BJ (cell line): ENCODE measurements at regions of chr17 and their contacts with region 1.

Region 1: DNA sequence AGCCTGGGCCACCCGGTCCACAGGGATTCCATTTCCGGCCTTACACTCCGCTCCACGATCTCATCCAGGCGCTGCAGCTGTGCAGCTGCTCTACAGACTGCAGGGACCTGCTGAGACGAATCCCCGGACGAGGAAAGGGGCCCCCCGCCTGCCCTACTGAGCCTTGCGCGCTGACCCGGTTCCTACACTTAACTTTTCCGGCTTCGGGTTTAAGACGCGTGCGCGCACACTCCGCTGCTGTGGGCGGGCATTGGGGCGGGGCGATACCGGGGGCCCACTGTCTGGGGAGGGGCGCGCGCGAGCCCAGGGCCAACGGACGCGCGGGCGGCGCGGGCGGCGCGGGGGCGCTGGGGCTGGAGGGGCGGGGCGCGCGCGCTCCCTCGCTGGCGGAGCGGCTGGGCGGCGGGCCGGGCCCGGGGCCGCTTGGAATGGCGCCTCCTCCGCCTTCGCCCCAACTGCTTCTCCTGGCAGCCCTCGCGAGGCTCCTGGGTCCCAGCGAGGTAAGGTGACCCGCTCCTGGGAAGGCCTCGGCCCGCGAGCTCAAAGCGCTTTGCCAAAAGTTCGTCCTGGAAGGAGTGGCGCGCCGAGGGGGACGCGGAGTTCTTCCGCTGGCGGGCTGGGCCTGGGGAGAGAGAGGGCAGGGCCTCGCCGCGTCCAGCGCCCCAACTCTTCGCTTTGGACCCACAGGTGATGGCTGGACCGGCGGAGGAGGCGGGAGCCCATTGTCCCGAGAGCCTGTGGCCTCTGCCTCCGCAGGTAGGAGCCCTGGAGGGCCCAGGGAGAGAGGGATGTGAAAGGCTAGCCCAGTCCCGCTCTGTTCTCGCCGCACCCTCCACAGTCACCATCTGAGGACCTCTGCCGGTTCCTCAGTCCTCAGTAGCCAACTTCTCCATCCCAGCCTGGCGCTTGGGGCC is at the start of gene TP53I13:
- DNase-seq: no peak
- H3K4me3 ChIP-seq: peak within 1 kb of the TSS; percentile 79
- H3K27me3 ChIP-seq: no peaks in the 10 kb centered on the region
- CTCF ChIP-seq: 0 out of 2 replicates have a peak, but pooled peaks have one; percentile 5
- polyA plus RNA-seq, gene TP53I13: 26.8 and 38.7 TPM in 2 replicates

Region 2: GRCh38 chr17:29376667-29377270 is 191.8 kb before region 1 on chr17:
- CTCF ChIA-PET with region 1: interaction called, 59 read pairs
- POLR2A ChIA-PET with region 1: interaction called, 4 read pairs
- DNase-seq: peak; percentile 36
- H3K4me3 ChIP-seq: no peak overlapping the region
- H3K27me3 ChIP-seq: no peaks in the 10 kb centered on the region
- CTCF ChIP-seq: no peak

Region 3: DNA sequence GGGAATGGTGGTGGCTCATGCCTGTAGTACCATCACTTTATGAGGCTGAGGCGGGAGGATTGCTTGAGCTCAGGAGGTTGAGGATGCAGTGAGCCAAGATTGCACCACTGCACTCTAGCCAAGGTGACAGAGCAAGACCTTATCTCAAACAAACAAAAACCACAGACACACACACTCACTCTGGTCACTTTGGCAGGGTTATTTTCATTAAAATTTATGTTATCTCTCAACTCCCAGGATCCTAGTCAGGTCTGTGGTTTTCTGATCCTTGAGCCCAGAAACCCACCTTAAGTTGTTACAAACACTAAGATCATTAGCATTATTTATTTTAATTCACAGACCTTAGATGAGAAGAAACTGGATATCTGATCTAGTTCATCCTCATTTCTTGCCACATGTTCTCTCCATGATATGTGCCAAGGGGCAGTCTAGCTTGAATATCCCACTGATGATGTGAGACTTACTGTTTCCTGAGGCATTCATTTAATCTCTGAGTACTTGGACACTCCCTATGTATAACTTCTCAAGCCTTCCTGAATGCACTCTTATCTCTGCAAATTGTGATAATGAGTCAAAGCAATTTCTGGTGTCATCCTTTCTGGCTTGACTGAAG is 11.4 kb before region 1 on chr17:
- CTCF ChIA-PET with region 1: interaction called, 23 read pairs
- POLR2A ChIA-PET with region 1: no interaction called
- DNase-seq: no peak
- H3K4me3 ChIP-seq: no peak overlapping the region
- H3K27me3 ChIP-seq: no peaks in the 10 kb centered on the region
- CTCF ChIP-seq: no peak

Region 4: GRCh38 chr17:29579866-29580771 is 11.5 kb after region 1 on chr17:
- CTCF ChIA-PET with region 1: interaction called, 36 read pairs
- POLR2A ChIA-PET with region 1: no interaction called
- DNase-seq: no peak
- H3K4me3 ChIP-seq: no peak overlapping the region
- H3K27me3 ChIP-seq: no peaks in the 10 kb centered on the region
- CTCF ChIP-seq: peak; percentile 89

Region 5: DNA sequence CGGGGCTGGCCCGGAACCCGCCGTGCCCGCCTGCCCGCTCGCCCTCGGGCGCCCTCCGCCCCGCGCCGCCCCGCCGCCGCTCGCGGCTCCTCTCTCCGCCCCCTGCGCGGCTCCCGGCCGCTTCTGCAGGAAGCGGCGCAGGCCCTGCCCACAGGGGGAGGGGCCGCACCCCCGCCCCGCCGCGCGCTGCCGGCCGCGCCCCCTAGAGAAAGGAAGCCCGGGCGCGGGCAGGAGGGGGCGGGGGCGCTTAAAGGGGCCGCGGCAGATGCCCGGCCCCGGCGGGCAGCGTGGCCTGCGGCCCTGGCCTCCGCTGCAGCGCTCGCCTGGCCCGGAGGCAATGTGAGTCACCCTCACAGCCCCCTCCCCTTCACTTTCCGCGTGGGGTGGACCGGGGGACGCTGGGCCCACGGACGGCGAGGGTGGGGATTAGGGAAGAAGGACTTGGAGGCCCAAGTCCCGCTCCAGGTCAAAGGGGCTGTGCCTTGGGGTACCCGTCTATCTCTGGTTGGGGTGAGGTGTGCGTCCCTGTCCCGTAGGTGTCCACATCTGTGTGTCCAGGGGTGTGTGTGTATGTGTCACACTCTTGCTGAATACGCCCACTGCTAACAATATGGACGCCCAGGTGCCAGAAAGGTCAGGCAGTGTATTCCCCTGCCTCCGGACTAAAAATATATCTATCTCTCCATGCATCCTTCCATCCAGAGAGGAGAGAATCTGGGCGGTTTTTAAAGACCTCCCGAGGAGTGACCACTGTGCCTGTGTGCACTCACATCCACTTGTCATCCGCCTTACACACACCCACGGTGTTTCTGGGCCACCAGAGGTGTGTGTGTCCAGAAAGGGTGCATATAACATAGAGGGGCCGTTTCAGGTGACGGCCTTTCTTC is 21.2 kb after region 1 on chr17 and contains the start of gene GIT1:
- CTCF ChIA-PET with region 1: interaction called, 26 read pairs
- POLR2A ChIA-PET with region 1: no interaction called
- DNase-seq: no peak
- H3K4me3 ChIP-seq: peak within 1 kb of the TSS; percentile 79
- H3K27me3 ChIP-seq: no peaks in the 10 kb centered on the region
- CTCF ChIP-seq: no peak
- polyA plus RNA-seq, gene GIT1: 21.6 and 32.0 TPM in 2 replicates